IMR-90 (cell line): ENCODE measurements at regions of chr20 and their contacts with region 1.

Region 1: GRCh38 chr20:10074513-10074912 is 39.7 kb downstream of the ANKEF1 start:
- DNase-seq: peak; percentile 90
- ATAC-seq: peak; percentile 95
- H3K4me3 ChIP-seq: no peak overlapping the region
- H3K27ac ChIP-seq: no peak overlapping the region
- H3K4me1 ChIP-seq: peaks cover 2% of the 10 kb centered on the region; the same call in 1 of the 2 replicates
- H3K27me3 ChIP-seq: no peaks in the 10 kb centered on the region
- CTCF ChIP-seq: no peak
- POLR2A ChIP-seq: no peak
- RAD21 ChIP-seq: no peak

Region 2: DNA sequence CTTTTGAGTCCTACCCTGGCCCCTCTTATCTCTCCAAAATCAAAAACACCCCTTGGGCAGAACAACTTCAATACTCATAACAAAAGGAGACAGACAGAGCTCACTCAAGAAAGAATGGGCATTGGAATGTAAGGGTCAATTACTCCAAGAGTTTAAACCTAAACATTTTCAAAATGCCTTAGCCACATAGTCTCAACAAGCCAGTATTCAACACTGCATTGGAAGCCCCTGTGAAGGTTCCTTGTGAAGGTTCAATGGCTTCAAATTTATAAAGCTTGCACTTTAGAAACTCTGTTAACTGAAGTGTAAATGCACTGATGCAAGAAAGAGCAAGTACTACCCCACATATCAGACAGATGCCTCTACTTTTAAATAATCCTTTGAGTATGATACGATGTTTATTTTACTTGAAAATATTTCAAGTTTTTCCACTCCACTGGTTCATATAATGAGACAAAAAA is 699.3 kb before region 1 on chr20:
- CTCF ChIA-PET with region 1: no interaction called
- POLR2A ChIA-PET with region 1: no interaction called
- dilution Hi-C with region 1: no loop called
- in situ Hi-C with region 1: no loop called
- intact Hi-C with region 1: no loop called
- DNase-seq: peak; percentile 71
- ATAC-seq: peak; percentile 64
- H3K4me3 ChIP-seq: no peak overlapping the region
- H3K27ac ChIP-seq: peak overlapping the region; percentile 92
- H3K4me1 ChIP-seq: peaks cover 20% of the 10 kb centered on the region
- H3K27me3 ChIP-seq: no peaks in the 10 kb centered on the region
- CTCF ChIP-seq: no peak
- POLR2A ChIP-seq: no peak
- RAD21 ChIP-seq: no peak

Region 3: GRCh38 chr20:9999645-10000044 is 74.9 kb before region 1 on chr20:
- CTCF ChIA-PET with region 1: no interaction called
- POLR2A ChIA-PET with region 1: no interaction called
- dilution Hi-C with region 1: no loop called
- in situ Hi-C with region 1: no loop called
- intact Hi-C with region 1: loop called (anchors 5 kb)
- DNase-seq: no peak
- ATAC-seq: no peak
- H3K4me3 ChIP-seq: no peak overlapping the region
- H3K27ac ChIP-seq: no peak overlapping the region
- H3K4me1 ChIP-seq: no peaks in the 10 kb centered on the region
- H3K27me3 ChIP-seq: no peaks in the 10 kb centered on the region
- CTCF ChIP-seq: no peak
- POLR2A ChIP-seq: no peak
- RAD21 ChIP-seq: no peak

Region 4: GRCh38 chr20:10239954-10240353 is 165.4 kb after region 1 on chr20:
- CTCF ChIA-PET with region 1: no interaction called
- POLR2A ChIA-PET with region 1: no interaction called
- dilution Hi-C with region 1: no loop called
- in situ Hi-C with region 1: no loop called
- intact Hi-C with region 1: no loop called
- DNase-seq: peak; percentile 16
- ATAC-seq: no peak; the same call in 1 of the 2 replicates
- H3K4me3 ChIP-seq: no peak overlapping the region
- H3K27ac ChIP-seq: no peak overlapping the region
- H3K4me1 ChIP-seq: no peaks in the 10 kb centered on the region
- H3K27me3 ChIP-seq: no peaks in the 10 kb centered on the region
- CTCF ChIP-seq: no peak
- POLR2A ChIP-seq: no peak
- RAD21 ChIP-seq: no peak